ENCODE measurements at regions of chr17 and their contacts with region 1.

Region 1: DNA sequence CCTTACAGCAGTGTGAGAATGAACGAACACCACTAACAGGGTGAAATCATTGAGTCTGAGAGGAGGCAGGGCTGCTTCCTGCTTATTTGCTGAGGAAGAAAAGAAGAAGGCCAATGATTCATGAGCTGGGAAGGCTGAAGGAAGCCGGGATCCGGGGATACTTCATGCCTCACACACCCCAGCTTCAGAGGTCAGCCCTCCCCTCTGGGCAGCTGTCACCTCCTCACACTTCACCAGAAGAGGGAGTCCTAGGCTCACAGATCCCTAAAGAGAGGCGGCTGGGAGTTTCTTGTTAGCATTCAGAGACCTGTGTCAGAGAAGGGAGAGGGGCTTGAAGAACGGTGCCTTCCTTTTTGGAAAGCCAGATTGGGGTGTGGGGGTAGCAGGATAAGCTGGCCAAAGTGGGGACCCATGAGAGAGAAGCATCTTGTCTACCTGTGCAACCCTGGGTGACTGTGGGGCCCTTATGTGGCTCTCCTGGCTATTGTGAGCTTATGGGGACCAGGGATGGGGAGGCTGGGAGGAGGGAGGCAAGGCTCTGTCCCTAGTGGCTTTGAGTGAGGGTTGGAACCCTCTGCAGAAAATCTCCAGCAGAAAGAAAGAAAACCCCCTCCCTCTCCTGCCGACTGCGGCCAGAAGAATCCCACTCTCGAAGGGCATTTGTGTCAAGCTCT is 94.6 kb downstream of the RGS9 start:
- DNase-seq: peak; percentile 72
- H3K4me3 Mint-ChIP-seq: no peak overlapping the region
- H3K27ac Mint-ChIP-seq: no peak overlapping the region
- H3K4me1 Mint-ChIP-seq: peaks cover 41% of the 10 kb centered on the region
- H3K27me3 Mint-ChIP-seq: peaks cover 12% of the 10 kb centered on the region

Region 2: GRCh38 chr17:65027305-65027704 is 204.5 kb before region 1 on chr17:
- CTCF ChIA-PET with region 1: no interaction called
- POLR2A ChIA-PET with region 1: no interaction called
- intact Hi-C with region 1: loop called (anchors 1 kb)
- DNase-seq: peak; percentile 75
- H3K4me3 Mint-ChIP-seq: peak overlapping the region; percentile 62
- H3K27ac Mint-ChIP-seq: peak overlapping the region; percentile 96
- H3K4me1 Mint-ChIP-seq: peaks cover 83% of the 10 kb centered on the region
- H3K27me3 Mint-ChIP-seq: no peaks in the 10 kb centered on the region

Region 3: GRCh38 chr17:65074778-65075250 is 157.0 kb before region 1 on chr17:
- CTCF ChIA-PET with region 1: no interaction called
- POLR2A ChIA-PET with region 1: no interaction called
- intact Hi-C with region 1: no loop called
- DNase-seq: no peak
- H3K4me3 Mint-ChIP-seq: no peak overlapping the region
- H3K27ac Mint-ChIP-seq: no peak overlapping the region
- H3K4me1 Mint-ChIP-seq: no peaks in the 10 kb centered on the region
- H3K27me3 Mint-ChIP-seq: no peaks in the 10 kb centered on the region

Region 4: DNA sequence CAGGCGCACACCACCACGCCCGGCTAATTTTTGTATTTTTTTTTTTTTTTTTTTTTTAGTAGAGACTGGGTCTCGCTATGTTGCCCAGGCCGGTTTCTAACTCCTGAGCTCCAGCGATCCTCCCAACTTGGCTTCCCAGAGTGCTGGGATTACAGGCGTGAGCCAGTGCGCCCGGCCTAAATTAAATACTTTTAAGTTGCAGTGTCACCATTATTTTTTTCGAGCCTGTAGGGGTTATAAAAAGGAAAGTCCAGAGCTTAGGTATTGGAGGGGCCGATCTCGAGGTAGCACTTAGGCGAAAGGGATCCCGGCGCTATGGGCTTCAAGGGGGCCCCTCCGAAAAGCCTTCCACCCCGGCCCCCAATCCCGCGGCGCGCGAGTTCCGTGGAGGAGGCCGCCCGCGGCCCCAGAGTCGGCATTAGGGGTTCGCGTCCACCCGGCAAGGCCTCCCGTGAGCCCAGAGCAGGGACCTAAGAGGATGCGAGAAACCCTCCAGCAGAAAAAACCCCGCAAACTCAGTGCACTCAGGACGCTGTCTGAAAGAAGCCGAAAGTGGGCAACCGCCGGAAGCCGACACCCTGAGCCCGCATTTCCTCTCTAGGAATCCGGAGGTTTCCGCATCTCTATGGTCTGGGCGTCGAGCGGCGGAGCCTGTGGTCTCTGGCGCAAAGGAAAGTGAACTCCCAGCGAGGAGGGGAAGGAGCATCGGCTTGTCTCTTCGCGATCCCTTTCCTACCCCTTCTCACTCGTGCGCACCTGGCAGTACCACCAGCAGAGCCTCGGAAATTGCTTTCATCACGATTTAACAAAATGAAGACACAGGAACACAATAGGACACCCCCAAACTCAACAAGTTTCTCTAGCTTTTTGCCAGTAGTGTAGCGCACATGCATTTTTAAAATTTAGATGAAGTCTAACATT is 108.7 kb before region 1 on chr17:
- CTCF ChIA-PET with region 1: no interaction called
- POLR2A ChIA-PET with region 1: no interaction called
- intact Hi-C with region 1: loop called (anchors 1 kb)
- DNase-seq: peak; percentile 90
- H3K4me3 Mint-ChIP-seq: peak overlapping the region; percentile 78
- H3K27ac Mint-ChIP-seq: peak overlapping the region; percentile 90
- H3K4me1 Mint-ChIP-seq: peaks cover 23% of the 10 kb centered on the region
- H3K27me3 Mint-ChIP-seq: no peaks in the 10 kb centered on the region

Region 5: DNA sequence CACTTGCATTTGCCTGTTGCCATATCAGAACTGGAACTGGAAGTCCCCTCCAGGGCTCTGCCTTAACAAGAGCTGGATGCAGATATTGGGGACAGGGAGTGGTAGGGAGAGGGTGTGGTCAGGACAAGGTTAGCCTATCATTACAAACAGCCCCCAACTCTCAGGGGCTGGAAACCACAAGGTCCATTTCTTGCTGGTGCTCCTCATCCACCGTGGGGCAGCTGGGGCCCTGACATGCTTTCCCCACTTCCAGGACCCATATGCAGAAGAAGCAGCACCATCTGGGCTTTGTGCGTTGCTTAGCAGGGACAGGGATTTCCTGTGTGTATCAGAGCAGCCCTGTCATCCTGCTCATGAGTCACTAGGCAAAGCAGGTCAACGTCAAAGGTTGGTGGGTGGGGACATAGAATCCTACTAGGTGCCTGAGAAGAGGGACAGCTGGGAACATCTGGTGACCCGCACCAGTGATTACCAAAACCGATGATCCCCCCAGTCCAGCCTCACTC is 67.8 kb before region 1 on chr17:
- CTCF ChIA-PET with region 1: no interaction called
- POLR2A ChIA-PET with region 1: no interaction called
- intact Hi-C with region 1: no loop called
- DNase-seq: peak; percentile 81
- H3K4me3 Mint-ChIP-seq: no peak overlapping the region
- H3K27ac Mint-ChIP-seq: peak overlapping the region; percentile 51
- H3K4me1 Mint-ChIP-seq: peaks cover 14% of the 10 kb centered on the region
- H3K27me3 Mint-ChIP-seq: no peaks in the 10 kb centered on the region

Region 6: DNA sequence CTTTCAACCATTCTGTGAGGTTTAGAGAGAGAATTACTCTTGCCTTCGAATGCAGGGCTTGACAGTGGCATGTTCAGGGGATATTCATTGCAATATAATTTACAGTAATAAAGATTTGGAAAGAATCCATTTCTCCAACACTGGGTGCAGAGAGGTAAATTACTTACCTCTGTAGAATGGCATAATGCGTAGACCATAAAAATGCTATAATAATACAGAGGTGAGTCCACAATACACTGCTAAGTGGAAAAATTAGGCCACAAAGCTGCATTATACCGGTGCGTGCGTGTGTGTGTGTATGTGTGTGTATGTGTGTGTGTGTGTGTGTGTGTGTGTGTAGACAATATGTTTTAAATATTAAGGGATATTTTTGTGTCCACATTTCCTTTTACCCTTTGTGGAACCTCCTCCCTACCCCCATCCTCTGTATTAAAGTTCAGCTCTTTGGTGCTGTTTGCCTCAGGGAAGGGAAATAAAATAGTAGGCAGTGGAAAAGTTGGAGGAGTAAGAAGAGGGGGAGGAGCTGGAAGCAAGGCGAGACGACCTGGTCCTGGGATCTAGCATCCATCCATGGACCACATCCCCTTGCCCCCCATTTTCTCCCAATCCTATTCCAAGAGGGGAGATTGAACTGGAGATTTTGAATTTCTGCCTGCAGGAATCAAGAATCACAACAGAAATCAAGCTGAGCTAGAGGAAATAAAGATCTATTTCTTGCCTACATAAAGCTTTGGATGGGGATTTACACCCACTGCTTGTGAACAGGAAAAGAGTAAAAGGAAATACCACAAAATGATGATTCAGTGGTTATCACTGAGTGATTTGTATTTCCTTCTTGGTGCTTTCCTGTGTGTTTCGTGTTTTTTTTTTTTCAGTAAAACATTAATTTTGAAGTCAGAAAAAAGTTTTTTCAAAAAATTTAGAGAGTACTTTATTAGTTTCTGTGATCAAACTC is 30.2 kb after region 1 on chr17:
- CTCF ChIA-PET with region 1: interaction called, 6 read pairs
- POLR2A ChIA-PET with region 1: no interaction called
- intact Hi-C with region 1: loop called (anchors 1 kb)
- DNase-seq: no peak
- H3K4me3 Mint-ChIP-seq: no peak overlapping the region
- H3K27ac Mint-ChIP-seq: peak overlapping the region; percentile 15
- H3K4me1 Mint-ChIP-seq: peaks cover 23% of the 10 kb centered on the region
- H3K27me3 Mint-ChIP-seq: peaks cover 3% of the 10 kb centered on the region

Region 7: DNA sequence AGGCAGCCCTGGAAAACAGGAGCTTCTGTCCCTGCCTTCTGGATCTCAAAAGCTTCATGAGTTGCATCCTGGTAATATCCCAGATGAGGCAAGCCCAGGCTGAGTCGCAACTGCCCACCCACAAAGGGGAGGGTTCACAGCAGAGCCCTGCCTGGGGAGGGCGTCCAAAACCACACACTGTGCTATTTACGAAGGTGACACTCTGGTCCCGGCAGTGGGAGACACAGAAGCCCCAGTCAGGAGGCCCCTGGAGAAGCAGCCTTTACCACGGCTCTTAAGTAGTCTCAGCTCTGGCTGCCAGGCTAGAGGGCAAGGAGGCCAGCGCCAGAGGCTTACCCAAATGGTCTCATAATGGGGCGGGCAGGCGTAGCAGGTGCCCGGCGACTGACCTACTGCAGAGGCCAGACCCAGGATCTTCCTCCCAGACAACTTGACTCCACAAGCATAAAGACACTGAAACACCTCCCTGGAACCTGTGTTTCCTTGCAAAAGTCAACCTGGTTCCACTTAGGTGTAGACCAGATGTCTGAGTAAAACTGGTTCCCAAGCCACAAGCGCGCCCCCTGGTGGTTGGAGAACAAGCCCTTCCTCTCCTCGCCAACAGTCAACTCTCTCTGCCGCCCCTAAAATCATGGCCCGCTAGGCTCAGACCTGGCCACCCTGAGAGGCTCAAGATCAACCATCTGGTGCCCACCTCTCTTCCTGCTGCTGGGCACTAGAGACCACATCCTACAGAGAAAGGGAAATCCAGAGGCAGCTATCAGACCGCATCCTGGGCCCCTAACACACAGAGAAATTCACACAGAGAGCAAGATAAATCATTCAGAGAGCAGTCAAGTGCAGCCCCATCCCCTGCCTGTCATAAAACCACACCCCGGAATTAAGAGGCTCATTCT is 324.5 kb after region 1 on chr17:
- CTCF ChIA-PET with region 1: interaction called, 38 read pairs
- POLR2A ChIA-PET with region 1: no interaction called
- intact Hi-C with region 1: loop called (anchors 1 kb)
- DNase-seq: peak; percentile 91
- H3K4me3 Mint-ChIP-seq: no peak overlapping the region
- H3K27ac Mint-ChIP-seq: no peak overlapping the region
- H3K4me1 Mint-ChIP-seq: peaks cover 27% of the 10 kb centered on the region
- H3K27me3 Mint-ChIP-seq: no peaks in the 10 kb centered on the region

Region 8: DNA sequence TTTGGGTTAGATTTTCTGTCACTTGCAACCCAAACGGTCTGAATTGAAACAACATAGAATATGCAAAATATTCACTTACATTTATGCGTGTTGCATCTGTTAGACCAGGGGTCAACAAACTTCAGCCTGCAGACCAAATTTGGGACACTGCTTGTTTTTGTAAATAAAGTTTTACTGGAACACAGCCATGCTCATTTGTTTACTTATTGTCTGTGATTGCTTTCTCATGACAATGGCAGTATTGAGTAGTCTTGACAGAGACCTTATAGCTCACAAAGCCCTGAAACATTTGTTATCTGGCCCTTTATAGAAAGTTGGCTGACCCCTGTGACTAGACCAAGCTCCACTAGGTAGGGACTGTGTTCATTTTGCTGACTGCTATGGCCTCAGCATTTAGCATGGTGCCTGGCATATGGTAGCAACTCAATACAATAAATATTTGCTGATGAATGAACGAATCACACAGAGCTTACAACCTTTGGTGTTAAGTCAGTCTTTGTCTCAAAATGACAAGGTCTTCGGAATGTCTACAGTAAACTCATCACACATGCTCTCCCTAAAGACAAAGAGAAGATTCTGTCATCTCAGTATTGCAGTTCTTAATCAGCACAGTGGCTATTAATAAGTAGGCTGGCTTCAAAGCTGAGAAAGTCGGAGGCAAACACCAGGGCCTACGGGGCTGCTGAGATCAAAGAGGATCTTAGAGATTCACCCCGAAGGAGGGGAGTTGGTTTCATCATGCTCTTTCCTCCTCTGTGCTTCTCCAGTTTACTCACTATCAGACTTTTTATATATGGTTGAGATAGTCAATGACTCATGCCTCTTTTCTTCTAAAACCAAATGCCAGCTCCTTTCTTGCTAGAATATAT is 424.8 kb after region 1 on chr17:
- CTCF ChIA-PET with region 1: interaction called, 4 read pairs
- POLR2A ChIA-PET with region 1: interaction called, 5 read pairs
- intact Hi-C with region 1: loop called (anchors 1 kb)
- DNase-seq: peak; percentile 80
- H3K4me3 Mint-ChIP-seq: no peak overlapping the region
- H3K27ac Mint-ChIP-seq: no peak overlapping the region
- H3K4me1 Mint-ChIP-seq: peaks cover 38% of the 10 kb centered on the region
- H3K27me3 Mint-ChIP-seq: no peaks in the 10 kb centered on the region

Region 9: DNA sequence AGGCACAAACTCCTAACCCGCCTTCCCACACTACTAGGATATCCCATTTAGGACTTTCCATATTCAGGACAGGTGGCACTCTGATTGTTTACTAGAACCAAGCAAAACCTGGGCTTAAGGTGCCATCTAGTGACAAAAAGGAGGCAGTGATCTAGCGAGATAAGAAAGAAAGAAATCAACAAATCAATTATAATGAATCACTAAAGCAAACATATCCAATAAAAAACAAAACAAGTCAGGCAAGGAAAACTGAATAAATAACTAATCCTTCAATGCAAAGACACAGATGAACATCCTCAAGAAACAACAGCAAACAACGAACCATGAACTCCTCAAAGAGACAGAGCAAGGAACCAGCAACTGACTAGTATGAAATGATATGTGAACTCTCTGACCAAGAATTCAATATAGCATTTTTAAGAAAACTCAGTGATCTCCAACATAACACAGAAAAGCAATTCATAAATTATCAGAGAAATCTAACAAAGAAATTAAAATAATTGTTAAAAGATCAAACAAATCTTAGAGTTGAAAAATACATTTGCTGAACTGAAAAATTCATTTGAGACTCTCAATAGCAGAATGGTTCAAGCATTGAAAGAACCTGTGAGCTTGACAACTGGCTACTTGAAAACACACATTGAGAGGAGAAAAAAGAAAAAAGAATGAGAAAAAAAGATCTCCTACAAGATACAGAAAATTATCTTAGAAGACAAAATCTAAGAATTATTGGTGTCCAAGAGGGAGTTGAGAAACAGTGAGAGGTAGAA is 756.5 kb after region 1 on chr17:
- CTCF ChIA-PET with region 1: interaction called, 30 read pairs
- POLR2A ChIA-PET with region 1: interaction called, 4 read pairs
- intact Hi-C with region 1: loop called (anchors 10 kb)
- DNase-seq: no peak
- H3K4me3 Mint-ChIP-seq: no peak overlapping the region
- H3K27ac Mint-ChIP-seq: no peak overlapping the region
- H3K4me1 Mint-ChIP-seq: no peaks in the 10 kb centered on the region
- H3K27me3 Mint-ChIP-seq: no peaks in the 10 kb centered on the region

Measured in activated CD4-positive, alpha-beta memory T cell treated with anti-CD3 and anti-CD28 coated beads for 36 hours (primary cell).